MCF 10A (cell line): ENCODE measurements at regions of chrX and their contacts with region 1.

Region 1: GRCh38 chrX:134969726-134970125 is 21.1 kb upstream of the SMIM10 start:
- DNase-seq: no peak
- H3K4me3 Mint-ChIP-seq: no peak overlapping the region
- H3K27ac Mint-ChIP-seq: no peak overlapping the region
- H3K4me1 Mint-ChIP-seq: no peaks in the 10 kb centered on the region
- H3K27me3 Mint-ChIP-seq: peaks cover 52% of the 10 kb centered on the region
- CTCF ChIP-seq: no peak

Region 2: DNA sequence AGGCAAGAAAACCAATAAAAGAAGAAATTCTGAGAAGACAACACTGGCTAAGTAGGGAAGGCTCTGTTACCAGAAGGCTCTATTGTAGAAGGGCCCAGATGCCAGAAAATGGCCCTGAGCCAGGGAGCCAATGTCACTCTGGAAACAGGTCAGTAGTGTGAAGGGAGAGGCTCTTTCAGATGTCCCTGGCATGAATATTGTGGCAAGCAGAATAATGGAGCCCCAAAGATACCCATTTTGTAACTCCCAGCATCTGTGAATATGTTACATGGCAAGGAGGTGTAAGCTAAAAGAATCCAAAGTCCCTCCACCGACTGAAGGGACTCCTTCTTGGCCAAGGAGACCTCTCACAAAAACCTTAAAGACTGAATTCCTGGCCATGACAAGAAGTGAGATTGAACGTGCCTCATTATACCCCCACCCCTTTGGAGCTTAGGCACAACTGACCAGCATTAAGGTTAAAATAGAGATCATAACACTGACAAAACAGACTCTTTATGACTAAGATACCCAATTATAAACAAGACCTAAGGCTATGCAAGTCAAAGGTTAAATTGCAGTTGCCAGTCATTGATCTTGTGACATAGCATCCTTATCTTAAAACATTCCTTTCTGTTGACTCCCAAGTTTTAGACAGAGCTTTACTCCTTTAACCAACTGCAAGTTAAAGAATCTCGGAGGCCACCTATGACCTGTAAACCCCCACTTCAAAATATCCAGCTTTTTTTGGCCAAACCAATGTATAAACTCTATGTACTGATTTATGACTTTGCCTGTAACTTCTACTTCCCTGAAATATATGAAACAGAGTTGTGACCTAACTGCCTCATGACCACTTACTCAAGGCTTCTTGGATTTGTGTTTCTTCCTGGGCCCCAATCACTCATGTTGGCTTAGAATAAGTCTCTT is 21.1 kb before region 1 on chrX:
- CTCF ChIA-PET with region 1: interaction called, 10 read pairs
- POLR2A ChIA-PET with region 1: no interaction called
- intact Hi-C with region 1: no loop called
- DNase-seq: peak; percentile 19
- H3K4me3 Mint-ChIP-seq: no peak overlapping the region
- H3K27ac Mint-ChIP-seq: no peak overlapping the region
- H3K4me1 Mint-ChIP-seq: peaks cover 4% of the 10 kb centered on the region
- H3K27me3 Mint-ChIP-seq: peaks cover 29% of the 10 kb centered on the region
- CTCF ChIP-seq: no peak

Region 3: DNA sequence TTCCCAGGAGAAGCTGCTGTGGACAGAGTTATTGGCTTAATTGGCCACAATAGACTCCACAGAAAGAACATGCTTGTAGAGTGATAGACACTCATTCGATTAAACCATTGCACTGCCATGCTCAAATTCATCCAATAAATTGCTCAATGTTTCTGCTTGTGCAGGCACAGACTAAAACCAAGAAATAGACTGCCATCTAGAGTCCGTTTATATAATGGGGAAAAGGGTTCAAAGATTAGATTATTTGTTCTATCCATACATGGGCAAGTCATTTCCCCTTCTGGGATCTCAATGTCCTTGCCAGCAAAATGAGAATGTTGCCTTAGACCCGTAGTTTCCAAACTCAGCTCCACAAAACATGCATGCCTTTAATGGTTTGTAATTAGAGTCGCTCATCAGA is 29.7 kb after region 1 on chrX:
- CTCF ChIA-PET with region 1: interaction called, 23 read pairs
- POLR2A ChIA-PET with region 1: no interaction called
- intact Hi-C with region 1: loop called (anchors 1 kb)
- DNase-seq: peak; percentile 52
- H3K4me3 Mint-ChIP-seq: no peak overlapping the region
- H3K27ac Mint-ChIP-seq: no peak overlapping the region
- H3K4me1 Mint-ChIP-seq: peaks cover 5% of the 10 kb centered on the region
- H3K27me3 Mint-ChIP-seq: peaks cover 35% of the 10 kb centered on the region
- CTCF ChIP-seq: peak; percentile 47

Region 4: DNA sequence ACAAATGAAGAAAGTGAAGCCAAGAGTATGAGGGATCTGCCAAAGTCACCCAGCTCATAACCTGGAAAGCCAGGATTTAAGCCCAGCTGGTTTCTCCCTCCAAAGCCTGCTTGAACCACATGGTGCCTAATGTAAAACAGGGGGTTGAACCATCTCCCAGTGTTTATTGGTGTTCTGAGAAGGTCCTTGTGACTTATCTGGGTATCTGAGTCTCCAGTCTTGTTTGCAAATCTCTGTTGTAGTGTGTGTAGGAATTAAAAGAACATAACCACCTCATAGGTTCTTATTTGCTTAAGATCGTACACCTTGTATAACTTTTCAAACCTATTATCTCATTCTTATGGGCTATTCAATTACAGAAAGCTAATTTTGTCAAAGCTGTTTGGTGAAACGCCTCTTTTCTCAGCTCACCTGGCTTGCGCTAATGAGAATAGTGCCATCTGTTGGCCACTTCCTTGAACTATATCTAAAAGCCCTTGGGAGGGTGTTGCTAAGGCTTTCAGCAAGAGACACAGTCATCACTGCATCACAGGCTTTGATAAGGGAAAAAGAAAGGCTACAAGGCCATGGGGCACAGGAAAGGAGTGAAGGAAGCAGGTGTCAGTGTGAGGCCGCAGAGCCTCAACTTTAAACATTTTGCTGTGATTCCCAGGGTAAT is 116.6 kb after region 1 on chrX:
- CTCF ChIA-PET with region 1: interaction called, 8 read pairs
- POLR2A ChIA-PET with region 1: no interaction called
- intact Hi-C with region 1: loop called (anchors 1 kb)
- DNase-seq: peak; percentile 72
- H3K4me3 Mint-ChIP-seq: no peak overlapping the region
- H3K27ac Mint-ChIP-seq: no peak overlapping the region
- H3K4me1 Mint-ChIP-seq: no peaks in the 10 kb centered on the region
- H3K27me3 Mint-ChIP-seq: peaks cover 34% of the 10 kb centered on the region
- CTCF ChIP-seq: peak; percentile 54

Region 5: GRCh38 chrX:135264211-135264610 is 294.5 kb after region 1 on chrX:
- CTCF ChIA-PET with region 1: no interaction called
- POLR2A ChIA-PET with region 1: no interaction called
- intact Hi-C with region 1: no loop called
- DNase-seq: peak; percentile 36
- H3K4me3 Mint-ChIP-seq: no peak overlapping the region
- H3K27ac Mint-ChIP-seq: peak overlapping the region; percentile 74
- H3K4me1 Mint-ChIP-seq: peaks cover 9% of the 10 kb centered on the region
- H3K27me3 Mint-ChIP-seq: peaks cover 49% of the 10 kb centered on the region
- CTCF ChIP-seq: no peak